Activated CD4-positive, alpha-beta T cell treated with anti-CD3 and anti-CD28 coated beads, Interleukin-2, amount 10 ng/mL, durations not matched to agents 24 days and 14 days (primary cell): ENCODE measurements at regions of chr19 and their contacts with region 1.

Region 1: GRCh38 chr19:52296773-52297600 is at the start of gene ZNF480:
- DNase-seq: peak; percentile 95
- H3K4me3 Mint-ChIP-seq: peak within 1 kb of the TSS; percentile 83
- H3K27ac Mint-ChIP-seq: peak within 1 kb of the TSS; percentile 98
- H3K4me1 Mint-ChIP-seq: peaks cover 17% of the 10 kb centered on the region
- H3K27me3 Mint-ChIP-seq: peaks cover 5% of the 10 kb centered on the region
- total RNA-seq, gene ZNF480: 4.2 and 5.0 TPM in 2 replicates

Region 2: GRCh38 chr19:52110737-52111136 is 186.2 kb before region 1 on chr19:
- intact Hi-C with region 1: no loop called
- DNase-seq: no peak
- H3K4me3 Mint-ChIP-seq: no peak overlapping the region
- H3K27ac Mint-ChIP-seq: no peak overlapping the region
- H3K4me1 Mint-ChIP-seq: no peaks in the 10 kb centered on the region
- H3K27me3 Mint-ChIP-seq: no peaks in the 10 kb centered on the region

Region 3: DNA sequence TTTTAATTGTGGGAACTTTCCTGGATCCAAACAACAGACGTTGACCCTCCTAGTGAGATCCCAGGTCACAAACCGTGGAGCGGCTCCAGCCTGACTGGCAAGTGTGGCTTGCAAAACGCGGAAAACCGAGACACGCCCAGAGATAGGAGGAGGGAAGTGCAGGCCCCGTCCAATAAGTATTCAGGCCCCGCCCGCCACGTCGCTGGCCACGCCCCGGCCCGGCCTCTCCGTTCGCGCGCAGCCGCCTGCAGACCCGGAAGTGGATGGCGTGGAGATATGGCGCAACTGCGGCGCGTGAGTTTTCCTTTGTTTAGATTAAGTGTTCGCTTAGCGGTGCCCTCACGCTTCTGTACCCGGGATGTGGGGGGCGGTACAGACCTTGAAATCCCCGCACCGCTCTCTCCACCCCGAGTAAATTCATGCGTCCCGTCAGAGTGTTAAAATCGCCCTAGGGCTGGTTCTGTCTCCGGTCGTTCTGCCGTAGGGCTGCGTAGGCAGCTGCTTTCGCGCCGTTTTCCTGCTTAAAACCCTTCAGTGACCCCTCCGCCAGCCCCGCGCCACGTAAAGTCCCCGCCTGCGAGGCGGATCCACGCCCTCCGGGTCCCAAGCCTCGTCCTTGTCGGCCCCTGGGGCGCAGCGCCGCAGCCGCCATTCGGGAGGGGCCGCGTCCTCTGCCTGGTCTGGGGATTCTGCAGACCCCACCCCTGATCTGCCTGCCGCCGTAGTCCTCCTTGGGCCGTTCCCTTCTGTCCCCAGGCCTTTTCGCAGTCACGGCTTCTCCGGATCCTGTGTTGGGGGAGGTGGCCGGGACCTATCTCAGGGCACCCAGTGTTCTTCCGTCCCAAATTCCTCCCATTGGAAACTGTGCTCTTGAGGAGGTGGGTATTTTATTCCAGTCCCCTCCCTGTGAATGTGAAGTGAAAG is 27.4 kb before region 1 on chr19 and contains the start of gene ZNF766:
- intact Hi-C with region 1: loop called (anchors 1 kb)
- DNase-seq: peak; percentile 99
- H3K4me3 Mint-ChIP-seq: peak within 1 kb of the TSS; percentile 99
- H3K27ac Mint-ChIP-seq: peak within 1 kb of the TSS; percentile 96
- H3K4me1 Mint-ChIP-seq: peaks cover 11% of the 10 kb centered on the region
- H3K27me3 Mint-ChIP-seq: no peaks in the 10 kb centered on the region
- total RNA-seq, gene ZNF766: 18.2 and 19.9 TPM in 2 replicates